Spleen (tissue), 13 donors: ENCODE measurements at regions of chr4 and their contacts with region 1.

Region 1: DNA sequence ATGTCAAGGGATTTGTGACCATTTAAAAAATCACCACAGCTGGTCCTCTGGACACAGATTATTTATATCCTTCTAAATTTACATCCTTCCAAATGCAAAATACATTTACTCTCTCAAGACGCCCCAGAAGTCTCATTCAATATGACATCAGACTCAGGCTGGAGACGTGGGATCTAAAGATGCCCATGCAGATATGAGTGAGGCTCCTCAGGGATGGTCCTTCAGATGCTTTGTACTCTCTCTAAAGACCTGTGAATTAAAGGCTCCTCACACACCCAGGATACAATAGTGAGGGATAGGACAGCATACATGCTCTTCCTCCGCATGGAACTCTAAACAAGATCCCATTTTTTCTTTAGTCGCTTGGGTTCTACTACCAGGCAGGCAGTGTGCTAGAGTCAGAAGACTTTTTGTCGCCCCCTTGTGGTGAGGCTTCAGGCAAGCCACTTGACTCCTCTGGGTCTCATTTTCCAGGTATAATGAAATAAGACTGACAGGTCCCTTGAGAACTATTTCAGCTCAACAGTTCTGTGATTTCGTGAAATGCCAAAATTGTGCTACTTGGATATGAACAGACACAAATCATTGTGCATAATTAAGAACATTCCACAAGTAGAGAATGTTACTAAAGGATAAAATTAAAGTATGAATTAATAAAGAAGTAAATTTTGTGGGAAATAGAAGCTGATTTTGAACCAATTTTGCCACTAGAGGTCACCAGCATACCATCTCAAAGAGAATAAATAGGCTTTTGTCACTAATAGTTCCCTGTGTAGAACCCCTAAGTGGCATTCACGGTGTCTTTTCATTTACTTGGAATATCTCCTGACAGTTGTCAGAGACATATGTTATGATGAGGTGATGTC is 13.7 kb upstream of the SCOC start:
- DNase-seq: peak; percentile 81
- H3K4me3 ChIP-seq: no peak overlapping the region
- H3K27ac ChIP-seq: no peak overlapping the region
- H3K4me1 ChIP-seq: peaks cover 0 to 6% (median 5%) of the 10 kb centered on the region in 6 donors
- H3K27me3 ChIP-seq: no peaks in the 10 kb centered on the region
- CTCF ChIP-seq: peak; percentile 57 to 92 (median 86)
- POLR2A ChIP-seq: no peak

Region 2: DNA sequence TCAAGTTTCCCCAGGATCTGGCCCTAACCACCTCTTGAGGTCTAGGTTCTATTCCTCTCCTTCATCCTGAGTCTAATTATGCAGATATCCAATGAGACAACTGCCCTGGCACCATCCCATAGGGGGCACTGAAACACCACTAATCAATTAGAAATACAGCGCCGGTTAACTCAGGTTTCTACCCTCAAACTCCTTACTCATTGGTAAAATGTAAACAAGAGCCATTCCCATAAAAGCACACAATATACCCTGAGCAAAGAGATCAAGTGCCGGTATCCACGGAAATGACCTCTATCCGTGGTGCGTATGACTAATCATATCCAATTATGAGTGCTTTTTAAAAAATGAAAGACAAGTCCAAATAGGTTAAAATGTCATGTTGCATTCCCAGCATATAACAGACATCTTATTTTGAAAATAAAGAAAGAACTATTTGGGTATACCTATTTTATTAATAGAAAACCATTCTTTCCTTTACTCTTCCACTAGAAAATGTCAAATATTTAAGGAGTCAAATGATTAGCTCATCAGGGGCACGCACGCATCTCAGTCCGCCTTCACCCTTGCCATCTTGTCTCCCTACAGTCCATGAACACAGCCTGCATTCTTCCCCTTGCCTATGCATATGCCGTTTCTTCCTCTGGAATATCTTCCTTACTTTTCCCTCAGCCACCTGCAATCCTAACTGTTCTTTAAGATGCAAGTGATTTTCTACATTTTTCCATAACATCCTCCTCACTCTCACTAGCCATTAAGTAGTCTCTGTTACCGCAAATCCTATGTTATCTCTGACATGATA is 346.9 kb before region 1 on chr4:
- intact Hi-C with region 1: loop called (anchors 10 kb)
- DNase-seq: no peak
- H3K4me3 ChIP-seq: no peak overlapping the region
- H3K27ac ChIP-seq: peak overlapping the region in 2 of 8 donors; percentile 16 to 23
- H3K4me1 ChIP-seq: peaks cover 0 to 15% (median 8%) of the 10 kb centered on the region in 6 donors
- H3K27me3 ChIP-seq: no peaks in the 10 kb centered on the region
- CTCF ChIP-seq: peak; percentile 44 to 84 (median 75)
- POLR2A ChIP-seq: no peak

Region 3: GRCh38 chr4:140463182-140463581 is 103.4 kb after region 1 on chr4:
- intact Hi-C with region 1: no loop called
- DNase-seq: no peak
- H3K4me3 ChIP-seq: no peak overlapping the region
- H3K27ac ChIP-seq: no peak overlapping the region
- H3K4me1 ChIP-seq: no peaks in the 10 kb centered on the region
- H3K27me3 ChIP-seq: peaks cover 0 to 5% (median 0%) of the 10 kb centered on the region in 7 donors
- CTCF ChIP-seq: no peak
- POLR2A ChIP-seq: no peak

Region 4: DNA sequence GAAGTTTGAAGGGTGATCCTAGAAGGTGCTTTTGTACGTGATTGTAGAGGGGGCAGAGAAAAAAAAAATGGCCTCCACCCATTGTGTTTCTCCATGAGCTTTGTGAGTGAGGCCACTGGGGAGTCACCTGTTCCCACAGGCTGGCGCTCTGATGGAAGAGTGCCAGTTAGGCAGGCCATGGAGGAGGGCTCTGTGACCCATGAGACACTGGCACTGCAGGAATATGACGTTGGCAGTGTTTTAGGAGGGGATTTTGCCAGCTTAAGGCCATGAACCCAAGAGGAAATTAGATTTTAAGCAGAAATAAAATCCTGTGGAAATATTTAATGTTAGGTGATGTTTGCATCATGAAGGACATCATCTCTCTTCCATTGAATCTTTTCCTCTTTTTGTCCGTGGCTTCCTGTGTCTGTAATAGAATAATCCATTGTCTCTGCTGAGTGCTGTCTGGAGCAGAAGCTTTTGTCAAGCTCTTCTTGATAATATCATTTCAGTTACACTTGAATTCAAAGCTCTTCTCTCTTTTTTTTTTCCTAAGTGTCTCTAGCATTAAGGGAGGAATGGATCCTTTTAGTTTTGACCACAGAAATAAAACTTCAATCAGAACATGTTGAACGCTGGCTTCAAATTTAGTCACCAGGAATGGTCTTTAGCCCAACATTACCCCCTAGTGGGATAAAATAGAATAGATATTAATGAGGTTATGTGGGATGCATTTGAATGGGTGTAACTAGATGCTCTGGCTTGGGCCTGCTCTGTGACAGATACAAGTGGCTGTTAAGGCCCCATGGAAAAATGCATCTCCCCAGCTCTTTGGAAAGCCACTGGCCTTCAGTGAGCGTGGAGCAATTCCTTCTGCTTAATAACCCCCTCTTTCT is 250.0 kb after region 1 on chr4:
- intact Hi-C with region 1: loop called (anchors 5 kb)
- DNase-seq: no peak
- H3K4me3 ChIP-seq: no peak overlapping the region
- H3K27ac ChIP-seq: peak overlapping the region in 3 of 8 donors; percentile 6 to 57 (median 34)
- H3K4me1 ChIP-seq: peaks cover 0 to 22% (median 11%) of the 10 kb centered on the region in 6 donors
- H3K27me3 ChIP-seq: peaks cover 0 to 8% (median 0%) of the 10 kb centered on the region in 7 donors
- CTCF ChIP-seq: peak in 9 of 11 experiments; percentile 21 to 60 (median 51)
- POLR2A ChIP-seq: no peak

Region 5: GRCh38 chr4:140851032-140851636 is 491.3 kb after region 1 on chr4:
- intact Hi-C with region 1: loop called (anchors 5 kb)
- DNase-seq: no peak
- H3K4me3 ChIP-seq: no peak overlapping the region
- H3K27ac ChIP-seq: peak overlapping the region in 1 of 8 donors; percentile 27
- H3K4me1 ChIP-seq: peaks cover 0 to 10% (median 5%) of the 10 kb centered on the region in 6 donors
- H3K27me3 ChIP-seq: no peaks in the 10 kb centered on the region
- CTCF ChIP-seq: peak; percentile 42 to 90 (median 76)
- POLR2A ChIP-seq: no peak